Activated T-helper 1 cell treated with anti-CD3 and anti-CD28 coated beads, Interleukin-12 subunit alpha, Interleukin-12 subunit beta, Interleukin-2, Interleukin-4 antibody, amounts not matched to agents 30 ng/mL and 10 ng/mL and 1 ng/mL, durations not matched to agents 14 hours and 24 hours and 36 hours (primary cell): ENCODE measurements at regions of chr3 and their contacts with region 1.

Region 1: GRCh38 chr3:128447561-128448013 is 19.1 kb downstream of the DNAJB8 start:
- DNase-seq: peak; percentile 72
- H3K4me3 Mint-ChIP-seq: peak overlapping the region; percentile 66
- H3K27ac Mint-ChIP-seq: peak overlapping the region; percentile 96
- H3K4me1 Mint-ChIP-seq: peaks cover 64% of the 10 kb centered on the region
- H3K27me3 Mint-ChIP-seq: peaks cover 2% of the 10 kb centered on the region

Region 2: GRCh38 chr3:128466840-128467541 is 19.4 kb after region 1 on chr3 and contains the start of gene DNAJB8:
- intact Hi-C with region 1: loop called (anchors 1 kb)
- DNase-seq: peak; percentile 55
- H3K4me3 Mint-ChIP-seq: no peak within 1 kb of the TSS
- H3K27ac Mint-ChIP-seq: peak within 1 kb of the TSS; percentile 42
- H3K4me1 Mint-ChIP-seq: peaks cover 32% of the 10 kb centered on the region
- H3K27me3 Mint-ChIP-seq: peaks cover 27% of the 10 kb centered on the region
- total RNA-seq, gene DNAJB8: not detected in 2 replicates

Region 3: DNA sequence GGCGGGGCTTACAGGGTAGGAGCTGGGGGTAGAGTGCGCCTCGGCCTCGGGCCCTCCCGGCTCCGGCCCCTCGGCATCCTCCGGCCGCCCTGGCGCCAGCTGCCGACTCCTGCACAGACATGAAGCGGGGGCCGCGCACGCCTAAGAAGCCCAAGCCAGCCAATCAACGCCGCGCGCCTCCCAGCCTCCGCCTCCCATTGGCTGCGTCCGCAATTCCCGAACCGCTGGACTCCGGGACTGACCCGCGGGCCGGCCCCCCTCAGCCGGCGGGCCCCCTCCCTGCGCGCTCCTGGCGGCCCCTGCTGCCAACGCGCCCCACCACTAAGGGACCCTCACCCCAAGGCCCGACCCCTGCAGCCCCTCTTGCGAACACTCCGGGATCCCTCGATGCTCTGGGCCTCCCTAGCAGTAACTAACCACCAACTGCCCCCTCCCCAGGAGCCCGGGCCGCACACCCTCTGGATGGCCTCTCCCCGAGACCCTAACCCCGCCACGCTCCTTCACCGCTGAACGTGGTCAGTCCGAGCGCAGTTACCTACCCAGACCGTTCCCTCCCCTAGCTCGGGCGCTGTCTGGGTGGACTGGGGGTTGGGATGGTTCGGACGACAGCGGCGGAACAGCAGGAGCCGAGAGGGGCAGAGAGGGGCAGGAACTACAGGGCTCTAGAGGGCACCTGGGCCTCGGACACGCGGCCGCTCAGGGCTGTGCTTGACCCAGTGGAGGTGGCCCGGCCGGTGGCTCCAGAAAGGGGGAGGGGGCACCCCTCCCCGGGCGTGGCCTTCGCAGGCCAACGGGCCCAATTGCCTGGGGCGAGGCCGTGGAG is 40.4 kb after region 1 on chr3:
- intact Hi-C with region 1: loop called (anchors 1 kb)
- DNase-seq: no peak
- H3K4me3 Mint-ChIP-seq: no peak overlapping the region
- H3K27ac Mint-ChIP-seq: no peak overlapping the region
- H3K4me1 Mint-ChIP-seq: peaks cover 21% of the 10 kb centered on the region
- H3K27me3 Mint-ChIP-seq: peaks cover 67% of the 10 kb centered on the region

Region 4: DNA sequence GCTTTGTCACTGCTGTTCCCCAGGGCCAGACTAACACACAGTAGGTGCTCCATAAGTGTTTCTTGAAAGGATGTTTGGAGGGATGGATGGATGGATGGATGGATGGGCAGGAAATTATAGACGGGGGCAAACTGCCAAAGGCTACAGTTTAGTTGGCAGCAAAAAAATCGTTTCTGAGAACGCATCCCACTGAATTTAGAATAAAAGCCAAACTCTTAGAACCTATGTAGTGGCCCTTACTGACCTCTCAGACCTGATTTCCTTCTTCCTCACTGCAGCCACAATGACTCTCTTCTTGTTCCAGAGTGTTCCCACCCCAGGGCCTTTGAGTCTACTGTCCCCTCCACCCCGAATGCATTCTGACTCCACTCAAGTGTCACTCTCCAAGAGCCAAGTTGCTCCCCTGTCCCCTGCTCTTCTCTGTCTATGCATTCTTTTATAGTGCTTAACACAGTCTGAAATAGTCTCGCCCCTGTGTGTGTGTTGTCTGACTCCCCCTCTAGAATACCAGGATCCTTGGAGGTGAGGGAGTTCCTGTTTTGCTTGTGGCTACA is 50.6 kb after region 1 on chr3:
- intact Hi-C with region 1: no loop called
- DNase-seq: no peak
- H3K4me3 Mint-ChIP-seq: peak overlapping the region; percentile 35
- H3K27ac Mint-ChIP-seq: no peak overlapping the region
- H3K4me1 Mint-ChIP-seq: peaks cover 6% of the 10 kb centered on the region
- H3K27me3 Mint-ChIP-seq: peaks cover 57% of the 10 kb centered on the region

Region 5: GRCh38 chr3:128572644-128573105 is 125.1 kb after region 1 on chr3:
- intact Hi-C with region 1: loop called (anchors 2 kb)
- DNase-seq: no peak
- H3K4me3 Mint-ChIP-seq: no peak overlapping the region
- H3K27ac Mint-ChIP-seq: peak overlapping the region; percentile 3
- H3K4me1 Mint-ChIP-seq: peaks cover 11% of the 10 kb centered on the region
- H3K27me3 Mint-ChIP-seq: peaks cover 31% of the 10 kb centered on the region